HEK293 (cell line): ENCODE measurements at regions of chr2 and their contacts with region 1.

Region 1: GRCh38 chr2:27734305-27734704 is 37.2 kb upstream of the MRPL33 start:
- H3K4me3 ChIP-seq: no peak overlapping the region
- H3K27ac ChIP-seq: no peak overlapping the region
- H3K4me1 ChIP-seq: no peaks in the 10 kb centered on the region
- CTCF ChIP-seq: no peak

Region 2: DNA sequence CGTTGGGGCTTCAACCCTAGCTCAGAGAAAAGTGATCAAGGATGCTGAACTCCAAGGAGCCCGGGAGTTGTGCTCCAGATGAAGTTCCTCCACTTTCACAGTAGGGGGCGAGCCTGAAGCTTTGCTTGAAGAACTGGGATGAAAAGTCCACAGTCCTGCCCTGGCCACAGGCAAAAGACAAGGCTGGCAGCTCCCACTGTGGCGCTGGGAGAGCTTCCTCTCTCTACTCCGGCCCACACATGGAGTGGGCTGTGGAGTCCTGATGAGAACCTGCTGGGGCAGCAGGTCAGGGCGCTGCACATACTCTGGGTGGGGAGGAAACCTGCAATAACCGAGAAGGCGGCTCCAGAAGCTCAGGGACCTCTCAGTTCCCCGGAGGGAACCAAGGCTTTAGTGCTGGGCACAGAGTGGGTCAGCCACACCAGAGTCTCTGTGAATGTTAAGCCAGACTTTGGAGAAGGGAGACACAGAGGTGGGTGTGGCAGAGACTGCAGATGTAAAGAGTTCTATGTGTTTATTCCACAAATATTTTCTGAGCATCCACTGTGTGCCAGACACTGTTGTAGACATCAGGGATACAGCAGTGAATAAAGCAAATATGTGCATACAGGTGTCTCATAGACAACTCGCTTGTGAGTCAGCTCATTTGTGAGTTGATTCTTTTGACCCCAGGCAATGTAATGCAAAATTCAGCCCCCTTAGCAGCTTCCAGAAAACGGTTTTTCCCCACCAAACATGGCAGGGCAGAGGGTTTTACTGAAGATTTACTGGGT is 10.7 kb before region 1 on chr2:
- CTCF ChIA-PET with region 1: interaction called, 11 read pairs
- POLR2A ChIA-PET with region 1: no interaction called
- H3K4me3 ChIP-seq: no peak overlapping the region
- H3K27ac ChIP-seq: no peak overlapping the region
- H3K4me1 ChIP-seq: no peaks in the 10 kb centered on the region
- CTCF ChIP-seq: 0 out of 2 replicates have a peak, but pooled peaks have one; percentile 25